Panc1 (cell line): ENCODE measurements at regions of chr10 and their contacts with region 1.

Region 1: DNA sequence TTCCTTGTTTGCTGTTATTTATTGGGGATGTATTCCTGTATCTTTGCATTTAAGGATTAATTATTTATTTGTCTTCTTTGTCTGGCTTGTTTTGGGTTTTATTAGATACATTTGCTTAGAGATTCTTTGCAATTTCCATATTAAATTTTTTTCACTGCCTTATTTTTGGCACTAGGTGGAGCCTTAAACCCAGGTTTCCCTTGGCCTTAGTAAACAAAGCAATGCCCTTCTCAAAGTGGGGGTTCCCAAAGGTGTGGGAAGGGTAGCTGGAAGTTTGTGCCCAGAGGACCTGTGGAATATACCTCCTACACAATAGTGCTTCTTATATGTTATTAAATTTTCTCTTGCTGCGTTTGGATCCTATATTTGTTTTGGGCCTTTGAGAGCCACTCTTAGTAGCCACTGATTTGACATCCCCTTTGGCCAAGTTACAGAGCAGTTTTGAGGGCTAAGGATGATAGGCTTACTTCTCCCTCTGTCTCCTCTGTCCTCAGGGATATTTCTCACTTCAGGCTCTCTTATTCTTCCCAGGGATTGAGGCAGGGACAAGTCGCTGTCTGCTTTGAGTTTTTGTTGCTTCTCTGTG is 162.3 kb downstream of the ITGB1 start:
- DNase-seq: peak; percentile 28
- ATAC-seq: no peak
- H3K4me3 ChIP-seq: no peak overlapping the region
- H3K27ac ChIP-seq: peak overlapping the region; percentile 80
- H3K4me1 ChIP-seq: peaks cover 5% of the 10 kb centered on the region
- H3K27me3 ChIP-seq: no peaks in the 10 kb centered on the region
- CTCF ChIP-seq: peak; percentile 72

Region 2: GRCh38 chr10:32139223-32140073 is 656.2 kb before region 1 on chr10:
- CTCF ChIA-PET with region 1: no interaction called
- POLR2A ChIA-PET with region 1: no interaction called
- in situ Hi-C with region 1: no loop called
- intact Hi-C with region 1: no loop called
- DNase-seq: peak; percentile 27
- ATAC-seq: peak; percentile 88
- H3K4me3 ChIP-seq: no peak overlapping the region
- H3K27ac ChIP-seq: no peak overlapping the region
- H3K4me1 ChIP-seq: no peaks in the 10 kb centered on the region
- H3K27me3 ChIP-seq: no peaks in the 10 kb centered on the region
- CTCF ChIP-seq: no peak

Region 3: GRCh38 chr10:32661341-32661740 is 134.3 kb before region 1 on chr10:
- CTCF ChIA-PET with region 1: no interaction called
- POLR2A ChIA-PET with region 1: no interaction called
- in situ Hi-C with region 1: no loop called
- intact Hi-C with region 1: no loop called
- DNase-seq: no peak
- ATAC-seq: no peak
- H3K4me3 ChIP-seq: no peak overlapping the region
- H3K27ac ChIP-seq: no peak overlapping the region
- H3K4me1 ChIP-seq: no peaks in the 10 kb centered on the region
- H3K27me3 ChIP-seq: no peaks in the 10 kb centered on the region
- CTCF ChIP-seq: no peak

Region 4: GRCh38 chr10:32893431-32893830 is 97.7 kb after region 1 on chr10:
- CTCF ChIA-PET with region 1: no interaction called
- POLR2A ChIA-PET with region 1: no interaction called
- in situ Hi-C with region 1: no loop called
- intact Hi-C with region 1: loop called (anchors 10 kb)
- DNase-seq: no peak
- ATAC-seq: peak; percentile 64
- H3K4me3 ChIP-seq: no peak overlapping the region
- H3K27ac ChIP-seq: no peak overlapping the region
- H3K4me1 ChIP-seq: no peaks in the 10 kb centered on the region; the same call in none of the 2 replicates
- H3K27me3 ChIP-seq: no peaks in the 10 kb centered on the region
- CTCF ChIP-seq: peak; percentile 34